ENCODE measurements at regions of chr1 and their contacts with region 1.

Region 1: GRCh38 chr1:221072214-221072613 is 193.0 kb downstream of the HLX start:
- DNase-seq: no peak
- H3K4me3 Mint-ChIP-seq: no peak overlapping the region
- H3K27ac Mint-ChIP-seq: no peak overlapping the region
- H3K4me1 Mint-ChIP-seq: no peaks in the 10 kb centered on the region
- H3K27me3 Mint-ChIP-seq: no peaks in the 10 kb centered on the region
- CTCF ChIP-seq: no peak

Region 2: DNA sequence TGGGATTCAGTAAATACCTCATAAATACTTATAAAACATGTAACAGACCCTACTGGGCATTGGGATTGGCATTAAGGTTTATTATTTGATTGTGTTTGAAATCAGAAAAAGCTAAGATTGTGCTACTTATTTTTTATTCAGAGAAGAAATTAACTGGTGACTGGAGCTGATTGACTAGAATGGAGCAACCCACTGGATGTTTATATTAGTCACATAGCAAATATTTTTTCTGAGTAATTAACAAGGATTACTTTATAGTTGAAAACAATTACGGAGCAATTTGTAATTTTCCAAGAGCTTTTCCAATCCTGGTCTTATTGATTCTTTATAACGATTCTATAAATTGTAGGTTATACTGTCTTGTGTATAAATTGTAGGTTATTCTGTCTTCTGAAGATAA is 15.7 kb after region 1 on chr1:
- CTCF ChIA-PET with region 1: no interaction called
- POLR2A ChIA-PET with region 1: interaction called, 11 read pairs
- intact Hi-C with region 1: no loop called
- DNase-seq: no peak
- H3K4me3 Mint-ChIP-seq: no peak overlapping the region
- H3K27ac Mint-ChIP-seq: no peak overlapping the region
- H3K4me1 Mint-ChIP-seq: no peaks in the 10 kb centered on the region
- H3K27me3 Mint-ChIP-seq: no peaks in the 10 kb centered on the region
- CTCF ChIP-seq: no peak

Region 3: GRCh38 chr1:221172841-221173240 is 100.6 kb after region 1 on chr1:
- CTCF ChIA-PET with region 1: no interaction called
- POLR2A ChIA-PET with region 1: no interaction called
- intact Hi-C with region 1: no loop called
- DNase-seq: no peak
- H3K4me3 Mint-ChIP-seq: no peak overlapping the region
- H3K27ac Mint-ChIP-seq: no peak overlapping the region
- H3K4me1 Mint-ChIP-seq: no peaks in the 10 kb centered on the region
- H3K27me3 Mint-ChIP-seq: no peaks in the 10 kb centered on the region
- CTCF ChIP-seq: no peak

Region 4: DNA sequence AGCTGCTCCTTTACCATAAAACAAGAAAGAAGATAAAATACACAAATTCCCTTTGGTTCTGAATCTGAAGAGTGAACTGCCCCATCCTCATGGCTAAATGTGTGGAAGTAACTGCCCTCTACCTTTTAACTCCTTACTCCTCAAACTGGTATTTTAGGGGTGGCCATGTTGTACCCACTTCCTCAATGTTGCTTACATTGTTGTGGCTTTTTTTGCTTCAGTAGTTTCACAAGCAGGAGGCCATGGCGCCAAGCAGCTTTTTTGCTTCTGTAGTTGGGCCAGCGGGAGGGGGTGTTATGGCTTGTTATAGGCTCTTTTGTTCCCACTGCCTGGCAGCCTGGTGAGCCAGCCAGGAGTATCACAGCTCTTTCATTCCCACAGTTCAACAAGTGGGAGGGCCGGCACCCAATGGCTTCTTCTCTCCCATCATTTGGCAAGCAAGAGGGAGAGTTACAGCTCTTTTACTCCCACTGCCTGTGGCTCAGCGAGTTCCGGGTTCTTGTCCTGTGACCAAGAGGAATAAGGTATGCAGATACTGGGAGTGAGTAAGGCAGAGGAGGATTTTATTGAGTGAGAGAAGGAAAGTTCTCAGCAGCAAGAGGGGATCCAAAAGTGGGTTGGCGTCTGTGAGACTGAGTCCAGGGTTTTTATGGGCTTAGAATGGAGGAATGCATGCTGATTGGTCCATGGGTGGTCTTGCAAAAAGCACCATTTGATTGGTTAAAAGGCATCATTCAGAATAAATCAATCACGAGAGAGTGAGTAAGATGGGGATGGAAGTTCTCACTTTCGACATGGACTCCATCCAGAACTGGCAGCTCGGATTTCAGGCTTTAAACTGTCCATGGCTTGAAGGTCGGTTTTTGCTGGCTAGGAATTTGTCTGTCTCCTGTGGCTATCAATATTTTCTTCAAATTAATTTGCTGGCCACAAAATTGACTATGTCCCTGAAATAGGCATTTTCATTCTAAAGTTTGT is 236.6 kb after region 1 on chr1:
- CTCF ChIA-PET with region 1: no interaction called
- POLR2A ChIA-PET with region 1: no interaction called
- intact Hi-C with region 1: no loop called
- DNase-seq: no peak
- H3K4me3 Mint-ChIP-seq: no peak overlapping the region
- H3K27ac Mint-ChIP-seq: no peak overlapping the region
- H3K4me1 Mint-ChIP-seq: peaks cover 6% of the 10 kb centered on the region
- H3K27me3 Mint-ChIP-seq: no peaks in the 10 kb centered on the region
- CTCF ChIP-seq: no peak

Measured in MCF 10A (cell line).